Common myeloid progenitor, CD34-positive (primary cell): ENCODE measurements at regions of chr10 and their contacts with region 1.

Region 1: GRCh38 chr10:97185326-97186058 is at the start of gene SLIT1:
- DNase-seq: peak; percentile 22 to 55 (median 44)
- H3K4me3 ChIP-seq: peak within 1 kb of the TSS in 5 of 7 experiments; percentile 34 to 64 (median 50)
- H3K27ac ChIP-seq: no peak within 1 kb of the TSS
- H3K4me1 ChIP-seq: peaks cover 0 to 21% (median 9%) of the 10 kb centered on the region in 4 experiments
- H3K27me3 ChIP-seq: peaks cover 5 to 87% (median 44%) of the 10 kb centered on the region in 5 experiments

Region 2: DNA sequence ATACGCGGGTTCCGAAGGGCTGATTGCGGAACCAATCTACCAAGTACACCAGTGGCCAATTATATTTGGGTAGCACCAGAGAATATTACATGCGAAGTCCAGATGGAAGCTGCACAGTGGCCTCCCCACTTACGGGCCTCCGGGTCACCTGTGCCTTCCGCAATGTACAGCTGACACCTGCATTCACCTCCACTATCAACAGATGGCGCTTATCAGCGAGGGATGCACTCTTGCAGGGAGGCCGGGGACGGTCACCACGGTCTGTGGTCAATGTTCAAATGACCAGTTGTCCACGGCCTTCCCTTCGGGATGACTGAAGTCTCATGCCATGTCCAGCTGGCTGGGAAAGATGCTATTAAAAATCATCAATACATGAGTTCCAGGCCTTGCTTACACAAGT is 47.3 kb before region 1 on chr10:
- CTCF ChIA-PET with region 1: no interaction called
- POLR2A ChIA-PET with region 1: no interaction called
- DNase-seq: no peak
- H3K4me3 ChIP-seq: no peak overlapping the region
- H3K27ac ChIP-seq: no peak overlapping the region
- H3K4me1 ChIP-seq: peaks cover 0 to 18% (median 12%) of the 10 kb centered on the region in 4 experiments
- H3K27me3 ChIP-seq: peaks cover 0 to 18% (median 0%) of the 10 kb centered on the region in 5 experiments

Region 3: DNA sequence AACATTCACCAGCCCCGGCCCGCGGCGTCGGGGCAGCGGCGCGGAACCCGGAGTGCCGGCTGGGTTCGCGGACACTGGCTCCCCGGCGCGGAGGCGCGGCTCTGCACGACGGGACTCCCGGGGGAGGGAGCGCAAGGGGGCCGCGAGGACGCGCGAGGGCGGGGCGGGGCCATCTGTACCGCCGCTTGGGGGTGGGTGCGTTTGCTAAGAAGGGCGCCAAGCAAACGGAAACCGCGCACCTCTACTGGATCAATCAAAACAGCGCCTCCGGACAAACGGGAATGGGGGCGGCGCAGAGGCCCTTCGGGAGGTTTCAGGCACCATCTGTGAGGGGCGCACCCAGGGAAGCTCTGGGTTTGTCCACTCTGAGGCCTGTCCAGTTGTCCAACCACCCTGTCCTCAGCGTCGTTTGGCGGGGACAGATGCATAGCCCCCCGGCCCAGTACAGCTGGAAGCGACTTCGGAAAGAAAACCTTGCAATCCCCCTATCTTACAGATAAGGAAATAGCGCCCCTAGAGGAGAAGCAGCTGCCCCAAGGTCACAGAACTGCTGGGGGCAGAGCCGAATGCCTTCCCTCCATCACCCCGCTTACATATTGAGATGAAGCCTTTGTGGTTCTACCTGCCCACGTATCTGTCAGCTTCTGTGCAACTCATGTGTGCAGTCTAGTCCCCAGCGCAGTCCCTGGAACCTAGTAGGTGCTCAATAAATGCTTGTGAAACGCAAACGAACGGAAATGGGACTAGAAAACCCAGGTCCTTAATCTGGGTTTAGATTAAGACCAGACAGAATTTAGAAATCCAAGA is 10.9 kb after region 1 on chr10:
- CTCF ChIA-PET with region 1: interaction called, 37 read pairs
- POLR2A ChIA-PET with region 1: no interaction called
- DNase-seq: peak; percentile 63 to 84 (median 83)
- H3K4me3 ChIP-seq: peak overlapping the region in 6 of 7 experiments; percentile 46 to 78 (median 58)
- H3K27ac ChIP-seq: no peak overlapping the region
- H3K4me1 ChIP-seq: peaks cover 0 to 24% (median 15%) of the 10 kb centered on the region in 4 experiments
- H3K27me3 ChIP-seq: peaks cover 0 to 69% (median 26%) of the 10 kb centered on the region in 5 experiments